ENCODE measurements at regions of chr10 and their contacts with region 1.

Region 1: GRCh38 chr10:15433850-15434537 is 62.9 kb upstream of the FAM171A1 start:
- DNase-seq: no peak
- H3K4me3 ChIP-seq: peak overlapping the region in 3 of 8 donors; percentile 23 to 51 (median 31)
- H3K27ac ChIP-seq: peak overlapping the region in 1 of 8 donors; percentile 18
- H3K4me1 ChIP-seq: peaks cover 0 to 13% (median 5%) of the 10 kb centered on the region in 6 donors
- H3K27me3 ChIP-seq: peaks cover 0 to 13% (median 0%) of the 10 kb centered on the region in 7 donors
- CTCF ChIP-seq: peak in 10 of 11 experiments; percentile 32 to 87 (median 55)
- POLR2A ChIP-seq: no peak

Region 2: GRCh38 chr10:15585303-15585715 is 151.3 kb after region 1 on chr10:
- intact Hi-C with region 1: no loop called
- DNase-seq: peak; percentile 75
- H3K4me3 ChIP-seq: no peak overlapping the region
- H3K27ac ChIP-seq: peak overlapping the region in 2 of 8 donors; percentile 2 to 26
- H3K4me1 ChIP-seq: peaks cover 0 to 8% (median 7%) of the 10 kb centered on the region in 6 donors
- H3K27me3 ChIP-seq: no peaks in the 10 kb centered on the region
- CTCF ChIP-seq: peak in 10 of 11 experiments; percentile 20 to 75 (median 58)
- POLR2A ChIP-seq: no peak

Region 3: DNA sequence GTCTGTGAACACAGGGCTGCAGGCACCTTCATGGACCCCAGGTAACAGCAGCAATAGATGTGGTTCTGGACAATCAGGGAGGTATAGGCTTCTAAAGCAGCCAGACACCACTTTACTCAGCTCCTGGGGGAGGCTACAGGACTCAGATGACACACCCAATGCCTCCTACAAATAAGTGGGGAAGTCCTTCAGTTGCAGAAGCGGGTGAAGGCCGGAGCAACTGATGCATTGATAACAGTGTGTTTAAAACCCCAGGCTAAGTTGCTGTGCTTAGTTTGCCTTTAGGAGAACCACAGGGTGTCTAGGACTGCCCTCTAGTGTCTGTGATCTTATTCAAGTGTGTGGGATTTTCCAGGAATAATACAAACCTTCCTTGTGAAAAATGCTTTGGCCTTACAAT is 291.6 kb after region 1 on chr10:
- intact Hi-C with region 1: loop called (anchors 5 kb)
- DNase-seq: no peak
- H3K4me3 ChIP-seq: no peak overlapping the region
- H3K27ac ChIP-seq: no peak overlapping the region
- H3K4me1 ChIP-seq: peaks cover 0 to 12% (median 4%) of the 10 kb centered on the region in 6 donors
- H3K27me3 ChIP-seq: peaks cover 0 to 28% (median 0%) of the 10 kb centered on the region in 7 donors
- CTCF ChIP-seq: peak in 9 of 11 experiments; percentile 15 to 61 (median 30)
- POLR2A ChIP-seq: no peak